Dendritic cell treated with granulocyte-macrophage colony-stimulating factor and Interleukin-4, amounts not matched to agents 40 ng/mL and 50 ng/mL, for 4 days (primary cell): ENCODE measurements at regions of chr17 and their contacts with region 1.

Region 1: GRCh38 chr17:7989781-7990655 is 12.4 kb upstream of the GUCY2D start:
- H3K4me3 Mint-ChIP-seq: peak overlapping the region; percentile 80
- H3K27ac Mint-ChIP-seq: peak overlapping the region; percentile 87
- H3K4me1 Mint-ChIP-seq: peaks cover 27% of the 10 kb centered on the region
- H3K27me3 Mint-ChIP-seq: peaks cover 3% of the 10 kb centered on the region

Region 2: DNA sequence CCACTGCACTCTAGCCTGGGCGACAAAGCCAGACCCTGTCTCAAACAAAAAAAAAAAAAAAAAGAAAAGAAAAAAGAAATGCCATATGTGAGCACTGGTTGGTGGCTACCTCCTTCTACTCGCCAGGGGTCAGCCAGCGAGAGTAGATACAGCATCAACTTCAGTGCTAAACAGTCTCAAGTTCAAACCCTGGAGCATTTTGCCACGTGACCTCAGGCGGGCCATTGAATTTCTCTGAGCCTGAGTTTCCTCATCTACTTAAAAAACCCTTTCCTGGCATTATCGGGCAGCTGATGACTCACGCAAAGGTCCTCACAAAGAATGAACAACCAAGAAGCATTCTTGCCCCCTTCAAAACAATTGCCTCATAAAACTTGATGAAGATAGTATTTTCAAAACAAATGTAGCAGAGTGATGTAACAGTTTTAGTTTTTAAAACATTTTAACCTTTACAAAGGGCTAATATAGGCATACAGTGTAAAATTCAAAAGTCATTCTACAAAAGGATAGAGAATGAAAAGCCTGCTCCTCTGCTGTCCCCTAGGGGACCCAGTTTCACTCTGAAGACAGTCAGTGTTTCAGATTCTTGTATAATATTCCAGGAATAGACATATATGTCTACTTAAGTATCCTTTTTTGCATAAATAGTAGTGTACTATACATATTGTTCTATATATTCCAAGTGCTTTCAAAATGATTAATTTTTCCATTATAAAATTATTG is 244.1 kb before region 1 on chr17:
- intact Hi-C with region 1: loop called (anchors 10 kb)
- H3K4me3 Mint-ChIP-seq: no peak overlapping the region
- H3K27ac Mint-ChIP-seq: no peak overlapping the region
- H3K4me1 Mint-ChIP-seq: no peaks in the 10 kb centered on the region
- H3K27me3 Mint-ChIP-seq: peaks cover 3% of the 10 kb centered on the region

Region 3: GRCh38 chr17:7823581-7824397 is 166.2 kb before region 1 on chr17:
- intact Hi-C with region 1: loop called (anchors 2 kb)
- H3K4me3 Mint-ChIP-seq: no peak overlapping the region
- H3K27ac Mint-ChIP-seq: no peak overlapping the region
- H3K4me1 Mint-ChIP-seq: peaks cover 10% of the 10 kb centered on the region
- H3K27me3 Mint-ChIP-seq: peaks cover 29% of the 10 kb centered on the region

Region 4: DNA sequence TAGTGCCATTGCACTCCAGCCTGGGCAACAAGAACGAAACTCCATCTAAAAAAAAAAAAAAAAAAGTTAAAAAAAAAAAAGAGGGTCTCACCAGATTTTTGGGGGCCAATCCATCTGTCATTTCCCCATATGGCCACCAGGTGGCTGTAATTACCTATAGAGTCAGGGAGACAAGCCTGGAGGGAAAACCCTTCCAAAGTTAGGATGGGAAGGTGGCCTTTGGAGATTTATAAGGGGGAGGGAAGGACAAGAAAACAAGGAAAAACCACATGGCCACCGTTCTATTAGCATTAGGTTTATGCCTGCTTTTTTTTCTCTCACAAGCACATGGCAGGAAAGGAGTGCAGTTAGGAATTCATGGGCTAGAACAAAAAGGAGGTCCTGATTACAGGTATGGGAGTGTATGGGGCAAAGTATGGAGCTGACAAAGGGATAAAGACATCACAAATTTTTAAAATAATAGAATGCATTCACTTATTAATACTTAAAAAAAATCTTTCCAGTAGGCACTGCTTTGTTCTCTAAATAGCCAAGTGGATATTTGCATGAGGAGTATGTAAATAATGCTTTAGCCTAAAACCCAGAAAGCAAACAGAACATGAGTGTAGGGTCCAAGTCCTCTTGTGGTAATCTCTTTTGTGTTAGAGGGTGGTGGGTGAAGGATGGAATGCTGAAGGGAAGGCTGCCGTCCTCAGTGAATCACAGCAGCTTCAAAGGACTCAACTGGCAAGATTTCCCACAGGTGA is 127.2 kb before region 1 on chr17:
- intact Hi-C with region 1: loop called (anchors 5 kb)
- H3K4me3 Mint-ChIP-seq: no peak overlapping the region
- H3K27ac Mint-ChIP-seq: no peak overlapping the region
- H3K4me1 Mint-ChIP-seq: peaks cover 19% of the 10 kb centered on the region
- H3K27me3 Mint-ChIP-seq: no peaks in the 10 kb centered on the region

Region 5: GRCh38 chr17:7912927-7913524 is 77.0 kb before region 1 on chr17:
- intact Hi-C with region 1: loop called (anchors 1 kb)
- H3K4me3 Mint-ChIP-seq: no peak overlapping the region
- H3K27ac Mint-ChIP-seq: peak overlapping the region; percentile 39
- H3K4me1 Mint-ChIP-seq: peaks cover 58% of the 10 kb centered on the region
- H3K27me3 Mint-ChIP-seq: no peaks in the 10 kb centered on the region

Region 6: GRCh38 chr17:8041249-8041928 is 51.4 kb after region 1 on chr17:
- intact Hi-C with region 1: loop called (anchors 1 kb)
- H3K4me3 Mint-ChIP-seq: no peak overlapping the region
- H3K27ac Mint-ChIP-seq: no peak overlapping the region
- H3K4me1 Mint-ChIP-seq: peaks cover 66% of the 10 kb centered on the region
- H3K27me3 Mint-ChIP-seq: peaks cover 21% of the 10 kb centered on the region

Region 7: GRCh38 chr17:8057691-8058114 is 67.7 kb after region 1 on chr17:
- intact Hi-C with region 1: loop called (anchors 1 kb)
- H3K4me3 Mint-ChIP-seq: no peak overlapping the region
- H3K27ac Mint-ChIP-seq: no peak overlapping the region
- H3K4me1 Mint-ChIP-seq: peaks cover 40% of the 10 kb centered on the region
- H3K27me3 Mint-ChIP-seq: peaks cover 28% of the 10 kb centered on the region